Activated CD8-positive, alpha-beta T cell treated with anti-CD3 and anti-CD28 coated beads for 36 hours (primary cell): ENCODE measurements at regions of chr9 and their contacts with region 1.

Region 1: GRCh38 chr9:92140074-92140753 is 25.0 kb upstream of the SPTLC1 start:
- DNase-seq: peak; percentile 84
- ATAC-seq: peak; percentile 79
- H3K4me3 Mint-ChIP-seq: no peak overlapping the region
- H3K27ac Mint-ChIP-seq: no peak overlapping the region
- H3K4me1 Mint-ChIP-seq: peaks cover 7% of the 10 kb centered on the region
- H3K27me3 Mint-ChIP-seq: peaks cover 29% of the 10 kb centered on the region
- CTCF ChIP-seq: peak; percentile 96

Region 2: GRCh38 chr9:92055624-92056023 is 84.6 kb before region 1 on chr9:
- CTCF ChIA-PET with region 1: no interaction called
- POLR2A ChIA-PET with region 1: no interaction called
- intact Hi-C with region 1: no loop called
- DNase-seq: no peak
- ATAC-seq: no peak
- H3K4me3 Mint-ChIP-seq: no peak overlapping the region
- H3K27ac Mint-ChIP-seq: no peak overlapping the region
- H3K4me1 Mint-ChIP-seq: peaks cover 6% of the 10 kb centered on the region
- H3K27me3 Mint-ChIP-seq: no peaks in the 10 kb centered on the region
- CTCF ChIP-seq: no peak

Region 3: DNA sequence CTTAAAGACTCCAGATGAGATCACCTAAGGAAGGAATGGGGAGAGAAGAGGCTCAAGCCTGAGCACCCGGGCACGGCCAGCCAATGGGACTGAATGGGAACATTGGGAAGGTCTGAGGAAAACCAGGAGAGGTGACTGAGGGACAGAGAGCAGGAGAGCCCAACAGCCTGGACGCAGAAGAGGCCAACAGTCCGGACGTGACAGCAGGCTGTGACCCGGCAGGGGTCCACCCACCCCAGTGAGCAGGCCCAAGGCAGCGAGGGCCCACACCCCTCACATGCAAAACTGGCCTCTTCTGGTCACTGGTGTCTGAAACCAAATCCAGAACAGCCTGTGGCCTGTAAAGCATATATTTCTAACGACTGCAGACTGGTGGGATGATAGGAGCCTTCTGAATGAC is 17.4 kb before region 1 on chr9:
- CTCF ChIA-PET with region 1: interaction called, 39 read pairs
- POLR2A ChIA-PET with region 1: no interaction called
- intact Hi-C with region 1: no loop called
- DNase-seq: no peak
- ATAC-seq: no peak
- H3K4me3 Mint-ChIP-seq: no peak overlapping the region
- H3K27ac Mint-ChIP-seq: no peak overlapping the region
- H3K4me1 Mint-ChIP-seq: no peaks in the 10 kb centered on the region
- H3K27me3 Mint-ChIP-seq: peaks cover 6% of the 10 kb centered on the region
- CTCF ChIP-seq: no peak

Region 4: GRCh38 chr9:92176068-92176799 is 36.0 kb after region 1 on chr9:
- CTCF ChIA-PET with region 1: interaction called, 24 read pairs
- POLR2A ChIA-PET with region 1: no interaction called
- intact Hi-C with region 1: no loop called
- DNase-seq: no peak
- ATAC-seq: peak; percentile 37
- H3K4me3 Mint-ChIP-seq: no peak overlapping the region
- H3K27ac Mint-ChIP-seq: no peak overlapping the region
- H3K4me1 Mint-ChIP-seq: no peaks in the 10 kb centered on the region
- H3K27me3 Mint-ChIP-seq: no peaks in the 10 kb centered on the region
- CTCF ChIP-seq: no peak

Region 5: DNA sequence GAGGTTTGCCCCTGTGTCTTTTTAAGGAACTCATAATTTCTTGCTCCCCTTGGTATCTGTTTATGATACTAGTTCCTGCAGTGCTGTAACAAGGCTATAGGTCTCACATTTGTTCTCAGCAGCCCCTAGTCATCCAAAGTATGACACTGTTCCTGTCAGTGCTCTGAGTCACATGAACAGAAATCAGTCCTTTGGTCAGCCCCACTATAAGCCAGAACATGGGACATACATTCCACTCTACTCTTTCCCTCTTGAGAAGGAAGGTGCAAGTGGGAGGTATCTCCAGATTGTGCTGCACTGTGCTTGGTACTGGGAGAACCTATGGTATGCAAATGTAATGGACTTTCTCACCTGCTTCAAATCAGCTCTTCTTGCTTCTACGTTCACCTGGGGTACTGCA is 66.3 kb after region 1 on chr9:
- CTCF ChIA-PET with region 1: interaction called, 31 read pairs
- POLR2A ChIA-PET with region 1: no interaction called
- intact Hi-C with region 1: no loop called
- DNase-seq: no peak
- ATAC-seq: no peak
- H3K4me3 Mint-ChIP-seq: no peak overlapping the region
- H3K27ac Mint-ChIP-seq: no peak overlapping the region
- H3K4me1 Mint-ChIP-seq: no peaks in the 10 kb centered on the region
- H3K27me3 Mint-ChIP-seq: no peaks in the 10 kb centered on the region
- CTCF ChIP-seq: no peak

Region 6: GRCh38 chr9:92265159-92265558 is 124.9 kb after region 1 on chr9:
- CTCF ChIA-PET with region 1: interaction called, 20 read pairs
- POLR2A ChIA-PET with region 1: no interaction called
- intact Hi-C with region 1: no loop called
- DNase-seq: no peak
- ATAC-seq: no peak
- H3K4me3 Mint-ChIP-seq: no peak overlapping the region
- H3K27ac Mint-ChIP-seq: no peak overlapping the region
- H3K4me1 Mint-ChIP-seq: peaks cover 4% of the 10 kb centered on the region
- H3K27me3 Mint-ChIP-seq: no peaks in the 10 kb centered on the region
- CTCF ChIP-seq: no peak

Region 7: GRCh38 chr9:92634712-92635605 is 494.7 kb after region 1 on chr9:
- CTCF ChIA-PET with region 1: interaction called, 14 read pairs
- POLR2A ChIA-PET with region 1: no interaction called
- intact Hi-C with region 1: no loop called
- DNase-seq: peak; percentile 80
- ATAC-seq: peak; percentile 52
- H3K4me3 Mint-ChIP-seq: no peak overlapping the region
- H3K27ac Mint-ChIP-seq: no peak overlapping the region
- H3K4me1 Mint-ChIP-seq: peaks cover 14% of the 10 kb centered on the region
- H3K27me3 Mint-ChIP-seq: no peaks in the 10 kb centered on the region
- CTCF ChIP-seq: peak; percentile 74